Heart right ventricle (tissue), 16 donors: ENCODE measurements at regions of chr6 and their contacts with region 1.

Region 1: DNA sequence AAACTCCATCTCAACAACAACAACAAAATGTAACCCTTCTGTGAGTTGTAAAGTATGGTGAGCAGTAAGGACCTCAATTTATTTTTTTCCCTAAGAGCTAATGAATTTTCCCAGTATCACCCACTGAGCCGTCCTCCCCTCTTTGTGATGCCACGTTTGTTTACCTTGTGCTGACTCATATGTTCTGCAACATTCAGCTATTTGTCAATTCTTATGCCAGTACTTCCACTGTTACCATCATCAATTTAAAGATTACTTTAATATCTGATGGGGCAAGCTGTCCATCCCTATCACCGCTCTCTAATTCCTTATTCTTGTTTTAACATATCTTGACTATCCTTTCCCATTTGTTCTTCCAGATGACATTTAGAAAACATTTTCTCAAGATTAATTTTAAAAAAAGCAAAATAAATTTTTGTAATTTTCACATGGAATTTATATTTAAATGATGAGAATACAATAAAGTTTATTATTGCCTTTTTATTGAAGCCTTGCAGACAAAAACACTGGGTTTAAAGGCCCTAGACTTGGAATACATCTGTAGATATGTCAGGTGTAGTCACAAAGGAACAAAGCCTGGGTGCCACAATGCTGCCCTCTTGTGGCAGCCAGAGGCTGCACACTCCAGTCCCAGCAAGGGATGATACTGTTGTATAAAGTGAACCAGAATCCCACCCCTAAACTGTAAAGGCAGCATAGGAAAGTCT is 37.4 kb downstream of the MAK start:
- DNase-seq: peak; percentile 27 to 51
- ATAC-seq: peak; percentile 67 to 88 (median 80)
- H3K4me3 ChIP-seq: no peak overlapping the region
- H3K27ac ChIP-seq: no peak overlapping the region
- H3K4me1 ChIP-seq: no peaks in the 10 kb centered on the region
- H3K27me3 ChIP-seq: no peaks in the 10 kb centered on the region
- CTCF ChIP-seq: peak; percentile 92 to 100 (median 98)

Region 2: GRCh38 chr6:10478187-10479040 is 322.6 kb before region 1 on chr6:
- intact Hi-C with region 1: loop called (anchors 1 to 5 kb)
- DNase-seq: no peak
- ATAC-seq: no peak
- H3K4me3 ChIP-seq: no peak overlapping the region
- H3K27ac ChIP-seq: no peak overlapping the region
- H3K4me1 ChIP-seq: no peaks in the 10 kb centered on the region
- H3K27me3 ChIP-seq: peaks cover 0 to 10% (median 0%) of the 10 kb centered on the region in 7 donors
- CTCF ChIP-seq: peak; percentile 34 to 70 (median 59)

Region 3: DNA sequence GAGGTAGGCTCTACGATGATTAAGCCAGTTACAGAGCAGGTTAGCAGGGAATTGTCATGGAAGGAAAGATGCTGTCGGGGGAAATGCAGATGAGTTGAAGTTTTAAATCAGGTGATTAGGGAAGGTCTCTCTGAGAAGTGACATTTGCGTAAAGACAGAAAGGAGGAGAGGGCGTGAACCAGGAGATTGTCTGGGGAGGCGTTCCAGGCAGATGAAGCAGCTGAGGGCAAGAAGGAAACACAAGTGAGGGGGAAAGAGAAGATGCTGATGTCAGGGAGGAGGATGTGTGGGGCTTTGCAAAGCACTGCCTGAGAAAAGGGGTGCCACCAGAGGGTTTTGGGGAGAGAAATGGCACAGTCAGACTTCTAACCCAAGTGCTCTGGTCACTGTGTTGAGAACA is 55.9 kb before region 1 on chr6:
- intact Hi-C with region 1: no loop called
- DNase-seq: no peak
- ATAC-seq: no peak
- H3K4me3 ChIP-seq: no peak overlapping the region
- H3K27ac ChIP-seq: no peak overlapping the region
- H3K4me1 ChIP-seq: peaks cover 8 to 31% (median 22%) of the 10 kb centered on the region in 9 donors
- H3K27me3 ChIP-seq: no peaks in the 10 kb centered on the region
- CTCF ChIP-seq: no peak